ENCODE measurements at regions of chr9 and their contacts with region 1.

Region 1: GRCh38 chr9:69549310-69550202 is 122.6 kb downstream of the APBA1 start:
- DNase-seq: peak; percentile 20 to 38
- H3K4me3 ChIP-seq: no peak overlapping the region
- H3K27ac ChIP-seq: no peak overlapping the region
- H3K4me1 ChIP-seq: peaks cover 0 to 2% of the 10 kb centered on the region in 2 donors
- H3K27me3 ChIP-seq: no peaks in the 10 kb centered on the region
- CTCF ChIP-seq: peak; percentile 77 to 97 (median 92)
- POLR2A ChIP-seq: no peak

Region 2: GRCh38 chr9:69249337-69249736 is 300.2 kb before region 1 on chr9:
- intact Hi-C with region 1: loop called (anchors 10 kb)
- DNase-seq: peak; percentile 23 to 42
- H3K4me3 ChIP-seq: no peak overlapping the region
- H3K27ac ChIP-seq: peak overlapping the region in 1 of 3 donors; percentile 20
- H3K4me1 ChIP-seq: peaks cover 4 to 9% of the 10 kb centered on the region in 2 donors
- H3K27me3 ChIP-seq: no peaks in the 10 kb centered on the region
- CTCF ChIP-seq: no peak
- POLR2A ChIP-seq: no peak

Region 3: DNA sequence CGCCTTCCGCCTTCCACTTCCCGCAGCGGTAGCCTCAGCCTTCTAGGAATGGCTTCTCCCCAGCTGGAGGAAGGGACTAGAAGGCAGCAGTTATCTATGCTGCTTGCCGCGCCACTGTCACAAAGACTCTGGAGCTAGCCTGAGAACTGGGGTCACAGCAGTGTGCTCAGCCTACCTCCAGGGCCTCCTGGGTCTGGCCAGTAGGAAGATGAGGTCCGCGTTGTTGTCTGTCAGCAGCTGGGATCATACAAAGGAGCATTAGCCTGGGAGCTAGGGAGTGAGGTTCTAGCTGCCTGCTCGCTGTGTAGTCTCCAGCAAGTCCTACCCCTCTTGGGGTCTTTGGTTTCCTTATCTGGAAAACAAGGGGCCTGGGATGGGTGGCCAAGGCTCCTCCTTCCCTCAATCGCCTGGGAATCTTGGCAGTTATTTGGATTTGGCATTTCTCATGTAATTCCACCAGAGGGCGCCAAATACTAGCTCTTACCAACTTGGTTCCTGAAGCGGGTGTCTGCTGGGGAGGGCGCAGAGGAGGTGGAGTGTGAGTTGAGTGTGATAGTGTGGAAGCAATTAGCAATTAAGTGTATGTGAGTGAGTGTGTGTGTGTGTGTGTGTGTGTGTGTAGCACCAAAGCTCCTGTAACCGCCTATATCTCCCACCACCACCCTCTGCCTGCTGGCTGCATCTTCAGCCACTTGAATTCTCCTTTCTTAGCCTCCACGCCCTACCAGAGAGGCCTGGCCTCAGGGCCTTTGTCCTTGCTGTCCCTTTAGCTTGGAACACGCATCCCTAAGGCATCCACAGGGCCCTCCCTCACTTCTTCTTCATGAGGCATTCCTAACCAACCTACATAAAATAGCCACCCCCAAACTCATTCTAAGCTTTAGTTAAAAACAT is 127.4 kb before region 1 on chr9:
- intact Hi-C with region 1: loop called (anchors 5 kb)
- DNase-seq: peak; percentile 49 to 54
- H3K4me3 ChIP-seq: no peak overlapping the region
- H3K27ac ChIP-seq: no peak overlapping the region
- H3K4me1 ChIP-seq: no peaks in the 10 kb centered on the region
- H3K27me3 ChIP-seq: no peaks in the 10 kb centered on the region
- CTCF ChIP-seq: peak; percentile 53 to 97 (median 81)
- POLR2A ChIP-seq: no peak

Measured in thyroid gland (tissue), 4 donors.